Ascending aorta (tissue), 2 donors: ENCODE measurements at regions of chr4 and their contacts with region 1.

Region 1: GRCh38 chr4:121736735-121737351 is 28.1 kb downstream of the SMIM43 start:
- DNase-seq: no peak
- H3K4me3 ChIP-seq: no peak overlapping the region
- H3K27ac ChIP-seq: no peak overlapping the region
- H3K4me1 ChIP-seq: no peaks in the 10 kb centered on the region
- H3K27me3 ChIP-seq: no peaks in the 10 kb centered on the region
- CTCF ChIP-seq: peak; percentile 21 to 55 (median 28)

Region 2: DNA sequence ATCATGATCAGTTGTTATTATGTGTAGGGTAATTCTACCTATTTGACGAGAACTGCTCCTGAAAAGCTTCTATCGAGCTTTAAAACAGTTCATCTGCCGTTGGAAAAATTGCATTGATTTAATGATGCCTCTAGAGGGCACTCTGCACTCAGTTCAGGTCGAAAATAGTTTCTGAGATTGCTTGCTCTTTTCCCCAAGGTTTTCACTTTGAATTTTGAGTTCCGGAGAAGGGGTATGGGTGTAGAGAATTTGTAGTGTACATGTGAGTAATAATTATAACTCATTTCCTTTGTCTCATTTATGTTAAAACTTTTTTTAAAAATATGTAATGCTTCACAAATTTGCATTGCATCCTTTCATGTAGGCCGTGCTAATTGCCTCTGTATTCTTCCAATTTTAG is 544.4 kb before region 1 on chr4:
- intact Hi-C with region 1: loop called (anchors 10 kb)
- DNase-seq: no peak
- H3K4me3 ChIP-seq: no peak overlapping the region
- H3K27ac ChIP-seq: no peak overlapping the region
- H3K4me1 ChIP-seq: no peaks in the 10 kb centered on the region
- H3K27me3 ChIP-seq: no peaks in the 10 kb centered on the region
- CTCF ChIP-seq: peak; percentile 16 to 68 (median 58)

Region 3: DNA sequence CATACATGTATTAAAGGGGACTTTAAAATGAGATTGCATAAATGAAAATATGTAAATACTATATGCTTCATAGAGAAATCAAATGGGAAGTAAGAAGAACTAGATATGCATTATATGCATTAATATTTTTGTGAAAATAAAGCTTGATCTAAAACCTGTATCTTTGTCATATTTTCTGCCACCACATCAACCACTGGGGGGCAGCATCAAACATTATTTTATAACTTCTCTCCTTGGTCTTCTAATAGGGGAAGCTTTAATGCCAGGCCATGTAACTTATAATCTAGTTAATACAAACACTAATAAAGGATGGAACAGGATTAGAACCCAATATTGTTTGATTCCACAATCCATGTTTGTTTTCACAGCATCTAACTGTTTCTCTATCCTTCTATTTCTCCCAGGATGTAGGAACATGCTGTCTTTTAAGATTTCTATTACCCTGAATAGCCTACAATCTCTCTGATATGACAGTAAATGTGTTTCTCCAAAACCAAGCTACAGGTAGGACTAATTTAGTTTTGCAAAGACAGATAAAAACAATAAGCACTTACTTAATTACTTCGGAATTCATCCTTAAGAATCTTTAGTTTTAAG is 366.0 kb before region 1 on chr4:
- intact Hi-C with region 1: loop called (anchors 2 kb)
- DNase-seq: no peak
- H3K4me3 ChIP-seq: no peak overlapping the region
- H3K27ac ChIP-seq: no peak overlapping the region
- H3K4me1 ChIP-seq: no peaks in the 10 kb centered on the region
- H3K27me3 ChIP-seq: no peaks in the 10 kb centered on the region
- CTCF ChIP-seq: peak in 2 of 3 experiments; percentile 45 to 54

Region 4: GRCh38 chr4:121484633-121485032 is 252.2 kb before region 1 on chr4:
- intact Hi-C with region 1: loop called (anchors 10 kb)
- DNase-seq: no peak
- H3K4me3 ChIP-seq: no peak overlapping the region
- H3K27ac ChIP-seq: no peak overlapping the region
- H3K4me1 ChIP-seq: no peaks in the 10 kb centered on the region
- H3K27me3 ChIP-seq: no peaks in the 10 kb centered on the region
- CTCF ChIP-seq: peak in 2 of 3 experiments; percentile 22 to 48

Region 5: DNA sequence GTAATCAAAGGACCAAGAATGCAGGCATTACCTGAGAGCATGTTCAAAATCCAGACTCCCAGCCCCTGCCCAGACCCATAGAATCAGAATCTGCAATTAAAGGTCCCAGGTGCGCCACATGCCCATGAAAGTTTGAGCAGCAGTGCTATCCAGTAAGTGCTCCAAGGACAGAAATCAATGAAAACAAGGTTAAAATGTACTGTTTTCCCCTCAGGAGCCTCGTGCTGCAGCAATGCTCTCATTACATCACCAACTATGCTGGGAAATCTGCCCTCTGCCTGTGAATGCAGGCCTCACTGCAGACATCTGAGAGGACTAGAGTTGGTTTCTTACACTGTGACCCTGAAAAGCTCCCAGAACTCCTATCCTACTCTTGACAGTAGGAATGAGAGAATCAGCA is 61.1 kb before region 1 on chr4:
- intact Hi-C with region 1: no loop called
- DNase-seq: no peak
- H3K4me3 ChIP-seq: no peak overlapping the region
- H3K27ac ChIP-seq: no peak overlapping the region
- H3K4me1 ChIP-seq: no peaks in the 10 kb centered on the region
- H3K27me3 ChIP-seq: no peaks in the 10 kb centered on the region
- CTCF ChIP-seq: no peak